Mammary epithelial cell (primary cell): ENCODE measurements at regions of chr15 and their contacts with region 1.

Region 1: DNA sequence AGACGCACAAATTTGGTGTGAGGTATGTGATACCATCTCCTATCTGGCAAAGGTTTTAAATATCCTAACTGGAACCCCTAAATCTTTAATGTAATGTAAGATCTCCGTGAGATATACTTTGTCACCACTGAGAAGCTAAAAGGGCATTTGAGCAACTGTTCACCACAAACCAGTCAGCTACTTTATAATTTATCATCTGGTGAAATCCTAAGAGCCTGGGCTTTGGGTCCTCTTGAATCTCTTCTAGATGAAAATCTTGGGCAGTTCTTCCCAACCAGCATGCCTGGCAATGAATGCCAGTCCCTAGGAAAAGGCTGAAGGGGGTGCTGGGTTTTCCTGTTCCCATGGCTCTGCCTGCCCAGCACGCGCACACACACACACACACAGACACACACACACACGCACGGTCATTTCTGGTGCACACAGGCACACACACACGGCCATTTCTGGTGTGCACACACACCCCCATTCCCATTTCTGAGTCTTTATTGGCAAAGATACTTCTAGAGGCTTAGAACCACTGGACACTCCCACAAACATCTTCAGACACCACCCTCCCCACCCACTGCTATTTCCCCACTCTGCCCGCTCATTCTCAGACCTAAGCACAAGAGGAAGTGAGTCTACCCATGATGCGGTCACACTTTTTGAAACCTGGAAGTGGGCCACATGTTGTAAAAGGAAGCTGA is 72.6 kb downstream of the MYO1E start:
- DNase-seq: peak; percentile 97
- H3K4me3 ChIP-seq: no peak overlapping the region
- H3K27ac ChIP-seq: peak overlapping the region; percentile 97
- H3K4me1 ChIP-seq: peaks cover 74% of the 10 kb centered on the region
- H3K27me3 ChIP-seq: no peaks in the 10 kb centered on the region
- CTCF ChIP-seq: no peak

Region 2: DNA sequence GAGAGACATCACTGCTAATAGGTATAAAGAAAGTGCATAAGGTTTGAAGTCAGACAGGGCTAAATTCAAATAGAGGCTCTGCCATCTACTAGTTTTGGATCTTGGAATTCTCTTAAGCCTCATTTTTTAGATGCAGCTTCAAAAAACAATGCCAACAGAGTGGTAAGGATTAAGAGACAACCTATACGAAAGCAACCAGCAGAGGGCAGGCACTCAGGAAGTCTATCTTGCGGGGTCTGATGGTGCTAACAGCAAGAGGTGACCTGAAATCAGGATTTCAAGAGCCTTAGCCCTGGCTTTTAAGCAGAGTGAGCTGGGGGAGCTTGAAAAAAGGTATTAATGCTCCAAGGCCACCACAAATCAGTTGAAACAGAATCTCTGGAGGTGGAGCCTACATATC is 52.7 kb before region 1 on chr15:
- CTCF ChIA-PET with region 1: no interaction called
- dilution Hi-C with region 1: no loop called
- in situ Hi-C with region 1: no loop called
- intact Hi-C with region 1: loop called (anchors 2 kb)
- DNase-seq: peak; percentile 35
- H3K4me3 ChIP-seq: no peak overlapping the region
- H3K27ac ChIP-seq: no peak overlapping the region
- H3K4me1 ChIP-seq: no peaks in the 10 kb centered on the region
- H3K27me3 ChIP-seq: no peaks in the 10 kb centered on the region
- CTCF ChIP-seq: peak; percentile 62 to 68

Region 3: DNA sequence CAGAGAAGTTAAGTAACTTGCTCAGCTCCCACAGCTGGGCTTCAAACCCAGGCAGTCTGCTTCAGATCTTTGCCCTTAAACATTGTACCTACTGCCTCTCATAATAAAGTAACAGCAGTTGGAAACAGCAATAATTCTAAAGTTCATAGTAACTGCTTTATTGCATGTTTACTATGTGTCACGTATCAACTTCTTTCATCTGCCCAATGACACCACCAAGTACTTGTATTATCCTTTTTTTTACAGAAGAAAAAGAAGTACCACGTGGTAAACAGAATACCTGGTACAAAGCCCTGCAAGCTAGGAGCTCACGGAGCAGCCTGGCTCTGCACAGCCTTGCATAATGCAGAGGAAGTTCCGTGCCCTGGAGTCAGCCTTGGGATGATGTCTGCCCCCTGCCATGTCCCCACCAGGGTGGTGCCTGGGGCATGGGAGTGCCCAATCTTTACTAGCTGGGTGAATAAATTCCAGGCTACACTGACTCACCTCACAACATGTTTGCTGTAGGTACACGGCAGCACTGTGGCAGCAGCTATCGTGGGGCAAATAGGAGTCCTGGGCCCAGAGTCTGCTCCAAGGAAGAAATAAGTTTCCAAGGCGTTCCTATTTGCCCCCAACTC is 16.2 kb before region 1 on chr15:
- CTCF ChIA-PET with region 1: interaction called, 5 read pairs
- dilution Hi-C with region 1: no loop called
- in situ Hi-C with region 1: no loop called
- intact Hi-C with region 1: loop called (anchors 1 kb)
- DNase-seq: peak; percentile 97
- H3K4me3 ChIP-seq: no peak overlapping the region
- H3K27ac ChIP-seq: peak overlapping the region; percentile 97
- H3K4me1 ChIP-seq: peaks cover 53% of the 10 kb centered on the region
- H3K27me3 ChIP-seq: no peaks in the 10 kb centered on the region
- CTCF ChIP-seq: peak in 1 of 2 donors; percentile 1

Region 4: DNA sequence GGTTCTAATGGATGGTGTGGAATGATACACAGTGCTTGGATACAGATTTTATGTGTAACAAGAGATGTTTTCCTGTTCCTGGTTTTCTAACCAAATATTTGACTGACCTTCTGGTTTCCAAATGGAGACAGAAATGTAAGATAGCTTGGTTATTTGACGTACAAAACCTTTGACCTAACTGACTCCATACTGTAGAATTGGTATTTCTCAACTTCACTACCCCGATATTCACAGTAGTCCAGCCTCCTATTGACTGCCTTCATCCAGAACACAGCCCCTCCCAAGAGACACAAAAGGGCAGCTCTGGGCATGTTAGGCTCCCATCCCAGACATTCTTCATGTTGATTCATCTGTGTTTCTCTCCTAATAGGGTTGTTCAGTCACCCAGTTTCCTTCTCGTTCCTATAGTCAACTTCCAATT is 39.2 kb after region 1 on chr15:
- CTCF ChIA-PET with region 1: no interaction called
- dilution Hi-C with region 1: no loop called
- in situ Hi-C with region 1: no loop called
- intact Hi-C with region 1: loop called (anchors 1 kb)
- DNase-seq: peak; percentile 94
- H3K4me3 ChIP-seq: no peak overlapping the region
- H3K27ac ChIP-seq: peak overlapping the region; percentile 90
- H3K4me1 ChIP-seq: peaks cover 33% of the 10 kb centered on the region
- H3K27me3 ChIP-seq: no peaks in the 10 kb centered on the region
- CTCF ChIP-seq: no peak